ENCODE measurements at regions of chr22 and their contacts with region 1.

Region 1: DNA sequence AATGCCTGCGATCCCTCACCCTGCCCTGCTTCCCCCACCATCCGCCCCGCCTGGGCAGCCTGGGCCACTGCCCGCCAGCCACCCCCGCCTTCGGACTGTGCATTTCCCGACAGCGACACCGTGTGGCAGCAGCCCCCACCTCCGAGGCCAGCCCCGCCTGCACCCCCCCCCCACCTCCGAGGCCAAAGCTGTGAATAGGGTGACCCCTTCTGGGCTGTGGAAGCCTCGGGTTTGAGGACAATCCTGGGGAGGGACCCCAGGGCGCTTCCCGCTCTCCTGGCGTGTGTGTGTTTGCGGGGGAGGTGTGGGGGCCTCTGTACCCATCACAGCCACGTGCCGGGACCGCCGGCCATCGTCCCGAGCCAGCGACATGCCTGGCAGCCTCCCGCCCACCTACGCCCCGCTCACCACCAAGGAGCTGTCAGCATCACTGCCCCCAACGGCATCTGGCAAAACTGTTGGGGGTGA is 33.8 kb upstream of the PPARA start:
- DNase-seq: peak; percentile 91
- H3K4me3 Mint-ChIP-seq: no peak overlapping the region
- H3K27ac Mint-ChIP-seq: no peak overlapping the region
- H3K4me1 Mint-ChIP-seq: peaks cover 2% of the 10 kb centered on the region
- H3K27me3 Mint-ChIP-seq: no peaks in the 10 kb centered on the region

Region 2: GRCh38 chr22:45424231-45424731 is 692.2 kb before region 1 on chr22:
- CTCF ChIA-PET with region 1: no interaction called
- POLR2A ChIA-PET with region 1: no interaction called
- intact Hi-C with region 1: no loop called
- DNase-seq: no peak
- H3K4me3 Mint-ChIP-seq: no peak overlapping the region
- H3K27ac Mint-ChIP-seq: no peak overlapping the region
- H3K4me1 Mint-ChIP-seq: no peaks in the 10 kb centered on the region
- H3K27me3 Mint-ChIP-seq: no peaks in the 10 kb centered on the region

Region 3: GRCh38 chr22:45994491-45995404 is 121.8 kb before region 1 on chr22:
- CTCF ChIA-PET with region 1: interaction called, 75 read pairs
- POLR2A ChIA-PET with region 1: no interaction called
- intact Hi-C with region 1: loop called (anchors 1 kb)
- DNase-seq: peak; percentile 85
- H3K4me3 Mint-ChIP-seq: no peak overlapping the region
- H3K27ac Mint-ChIP-seq: no peak overlapping the region
- H3K4me1 Mint-ChIP-seq: no peaks in the 10 kb centered on the region
- H3K27me3 Mint-ChIP-seq: peaks cover 2% of the 10 kb centered on the region

Region 4: GRCh38 chr22:46001046-46001422 is 115.5 kb before region 1 on chr22:
- CTCF ChIA-PET with region 1: interaction called, 257 read pairs
- POLR2A ChIA-PET with region 1: interaction called, 4 read pairs
- intact Hi-C with region 1: loop called (anchors 1 kb)
- DNase-seq: no peak
- H3K4me3 Mint-ChIP-seq: no peak overlapping the region
- H3K27ac Mint-ChIP-seq: no peak overlapping the region
- H3K4me1 Mint-ChIP-seq: peaks cover 3% of the 10 kb centered on the region
- H3K27me3 Mint-ChIP-seq: no peaks in the 10 kb centered on the region

Region 5: DNA sequence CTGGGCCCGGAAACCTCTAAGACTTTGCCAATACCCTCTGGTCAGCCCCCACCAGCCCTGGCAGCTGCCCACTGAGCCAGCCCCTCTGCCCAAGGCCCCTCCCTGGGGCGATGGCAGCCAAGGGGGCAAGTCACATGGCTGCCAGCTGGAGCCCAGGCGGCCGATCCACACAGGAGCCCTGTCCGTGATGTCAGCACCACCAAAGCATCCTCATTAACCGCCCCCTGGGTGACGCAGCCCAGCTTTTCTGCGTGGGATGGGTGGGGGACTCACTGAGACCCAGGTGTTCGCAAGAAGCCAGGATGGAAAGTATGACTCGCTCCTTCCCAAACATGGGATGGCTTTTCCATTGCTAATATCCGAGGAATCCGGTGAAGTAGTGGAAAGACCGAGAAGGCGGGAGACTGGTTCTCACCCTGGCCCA is 93.0 kb before region 1 on chr22:
- CTCF ChIA-PET with region 1: interaction called, 12 read pairs
- POLR2A ChIA-PET with region 1: no interaction called
- intact Hi-C with region 1: no loop called
- DNase-seq: no peak
- H3K4me3 Mint-ChIP-seq: no peak overlapping the region
- H3K27ac Mint-ChIP-seq: no peak overlapping the region
- H3K4me1 Mint-ChIP-seq: peaks cover 4% of the 10 kb centered on the region
- H3K27me3 Mint-ChIP-seq: peaks cover 30% of the 10 kb centered on the region

Region 6: GRCh38 chr22:46245511-46245910 is 129.0 kb after region 1 on chr22:
- CTCF ChIA-PET with region 1: no interaction called
- POLR2A ChIA-PET with region 1: no interaction called
- intact Hi-C with region 1: no loop called
- DNase-seq: no peak
- H3K4me3 Mint-ChIP-seq: no peak overlapping the region
- H3K27ac Mint-ChIP-seq: no peak overlapping the region
- H3K4me1 Mint-ChIP-seq: peaks cover 7% of the 10 kb centered on the region
- H3K27me3 Mint-ChIP-seq: no peaks in the 10 kb centered on the region

Region 7: DNA sequence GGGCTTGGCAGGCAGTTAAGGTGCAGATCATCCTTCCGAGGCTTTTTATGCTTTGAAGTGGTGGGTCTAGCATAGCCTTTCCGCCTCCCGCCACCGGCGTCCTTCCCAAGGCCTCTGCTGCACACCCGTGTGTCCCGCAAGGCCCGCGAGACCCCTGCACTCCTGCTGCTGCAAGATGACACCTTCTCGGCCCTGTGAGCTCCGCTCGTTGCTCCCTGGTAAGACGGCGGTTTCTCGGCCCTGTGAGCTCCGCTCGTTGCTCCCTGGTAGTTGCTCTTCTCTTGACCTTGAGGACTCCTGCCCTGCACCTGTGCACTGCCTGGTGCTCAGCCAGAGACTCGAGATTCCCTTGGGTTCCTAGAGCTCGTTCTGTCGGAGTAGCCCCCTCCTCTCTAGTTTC is 201.1 kb after region 1 on chr22:
- CTCF ChIA-PET with region 1: interaction called, 70 read pairs
- POLR2A ChIA-PET with region 1: no interaction called
- intact Hi-C with region 1: no loop called
- DNase-seq: no peak
- H3K4me3 Mint-ChIP-seq: no peak overlapping the region
- H3K27ac Mint-ChIP-seq: no peak overlapping the region
- H3K4me1 Mint-ChIP-seq: no peaks in the 10 kb centered on the region
- H3K27me3 Mint-ChIP-seq: no peaks in the 10 kb centered on the region

Measured in activated CD4-positive, alpha-beta memory T cell treated with anti-CD3 and anti-CD28 coated beads for 36 hours (primary cell).